SK-N-SH (cell line): ENCODE measurements at regions of chr7 and their contacts with region 1.

Region 1: GRCh38 chr7:113289140-113289740 is 170.9 kb upstream of the SMIM30 start:
- DNase-seq: peak; percentile 42
- H3K4me3 ChIP-seq: no peak overlapping the region
- H3K27ac ChIP-seq: no peak overlapping the region
- H3K4me1 ChIP-seq: no peaks in the 10 kb centered on the region
- H3K27me3 ChIP-seq: no peaks in the 10 kb centered on the region
- CTCF ChIP-seq: peak; percentile 84
- EP300 ChIP-seq: no peak
- RAD21 ChIP-seq: peak; percentile 90

Region 2: DNA sequence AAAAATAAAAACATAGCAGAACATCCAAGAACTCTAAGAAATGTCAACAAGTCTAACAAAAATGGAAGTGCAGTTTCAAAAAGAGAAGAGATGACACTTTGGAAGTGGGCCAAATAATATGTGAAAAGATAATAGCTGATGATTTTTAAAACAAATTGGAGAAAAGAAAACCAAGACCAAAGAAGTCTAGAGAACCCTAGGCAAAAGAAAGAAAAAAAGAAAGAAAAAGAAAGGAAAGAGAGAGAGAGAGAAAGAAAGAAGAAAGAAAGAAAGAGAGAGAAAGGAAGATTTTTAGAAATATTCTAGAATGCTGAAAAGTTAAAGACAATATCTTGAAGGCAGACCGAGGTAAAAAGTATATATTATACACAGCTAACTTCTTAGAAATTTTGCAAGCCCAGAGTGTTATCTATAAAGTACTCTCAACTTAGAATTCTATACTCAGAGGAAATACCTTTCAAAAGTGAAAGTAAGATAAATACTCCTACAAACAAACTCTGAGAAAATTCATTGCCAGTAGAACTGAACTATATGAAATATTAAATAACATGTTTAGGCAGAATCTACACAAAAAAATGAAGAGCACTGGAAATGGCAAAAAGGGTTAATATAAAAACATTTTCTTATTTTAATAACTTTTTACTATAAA is 32.2 kb before region 1 on chr7:
- CTCF ChIA-PET with region 1: no interaction called
- POLR2A ChIA-PET with region 1: no interaction called
- DNase-seq: no peak
- H3K4me3 ChIP-seq: peak overlapping the region in 1 of 2 experiments; percentile 12; a peak in 2 of 4 replicates
- H3K27ac ChIP-seq: no peak overlapping the region
- H3K4me1 ChIP-seq: no peaks in the 10 kb centered on the region
- H3K27me3 ChIP-seq: no peaks in the 10 kb centered on the region
- CTCF ChIP-seq: no peak
- EP300 ChIP-seq: no peak
- RAD21 ChIP-seq: no peak

Region 3: DNA sequence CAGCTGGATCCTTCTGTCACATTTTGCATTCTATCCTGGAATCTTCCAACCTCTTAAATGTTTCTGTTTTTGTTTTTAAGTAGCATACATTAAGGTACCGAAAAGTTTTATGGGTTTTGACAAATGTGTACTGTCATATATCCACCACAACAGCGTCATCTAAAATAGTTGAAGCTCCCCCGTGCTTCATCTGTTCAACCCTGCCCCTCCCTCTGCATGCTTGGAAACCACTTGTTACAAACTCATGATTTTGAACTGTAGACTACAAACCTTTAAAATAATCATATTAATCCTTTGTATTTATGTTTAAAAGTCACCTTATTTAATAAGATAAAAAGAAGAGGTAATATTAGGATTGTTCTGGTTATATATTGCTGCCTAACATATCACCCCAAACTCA is 11.9 kb after region 1 on chr7:
- CTCF ChIA-PET with region 1: interaction called, 11 read pairs
- POLR2A ChIA-PET with region 1: no interaction called
- DNase-seq: no peak
- H3K4me3 ChIP-seq: no peak overlapping the region
- H3K27ac ChIP-seq: no peak overlapping the region
- H3K4me1 ChIP-seq: no peaks in the 10 kb centered on the region
- H3K27me3 ChIP-seq: no peaks in the 10 kb centered on the region
- CTCF ChIP-seq: no peak
- EP300 ChIP-seq: no peak
- RAD21 ChIP-seq: no peak